Activated CD4-positive, alpha-beta T cell treated with anti-CD3 and anti-CD28 coated beads for 36 hours (primary cell): ENCODE measurements at regions of chr18 and their contacts with region 1.

Region 1: DNA sequence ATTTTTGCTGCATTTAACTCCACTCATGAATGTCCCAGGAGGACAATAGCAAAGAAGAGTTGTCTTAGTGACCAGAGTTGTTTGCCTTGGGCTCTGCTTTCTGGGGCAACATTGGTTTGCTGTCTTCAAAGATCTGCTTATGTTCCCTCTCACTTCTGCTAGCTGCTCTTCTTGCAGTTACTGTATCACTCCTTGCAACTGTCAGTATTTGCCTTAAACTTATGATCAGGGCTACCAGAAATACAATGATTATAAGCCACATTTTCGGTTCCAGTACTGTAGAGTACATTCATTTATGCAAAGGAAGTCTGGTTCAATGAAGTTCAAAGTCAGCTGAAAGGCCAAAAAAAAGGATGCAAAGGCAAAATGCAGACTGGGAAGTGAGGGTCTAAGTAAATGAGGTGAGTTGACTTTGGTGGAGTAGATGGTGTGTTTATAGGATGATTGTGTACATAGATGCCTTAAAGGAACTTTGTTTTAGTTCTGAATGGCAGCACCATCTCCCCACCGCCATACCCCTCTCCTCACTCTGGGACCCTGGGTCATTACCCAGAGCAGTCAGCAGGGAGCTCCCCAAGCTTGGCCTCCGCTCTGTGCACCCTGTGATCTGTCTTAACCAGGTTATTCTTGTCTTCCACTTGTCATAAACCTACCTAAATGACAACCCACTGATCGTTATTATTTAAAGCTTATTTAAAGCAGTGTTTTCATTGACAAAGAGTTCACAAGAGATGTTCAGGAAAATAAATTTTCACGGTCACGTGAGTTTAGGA is 236.0 kb downstream of the DOK6 start:
- DNase-seq: peak; percentile 54
- ATAC-seq: peak; percentile 73
- H3K4me3 Mint-ChIP-seq: no peak overlapping the region
- H3K27ac Mint-ChIP-seq: no peak overlapping the region
- H3K4me1 Mint-ChIP-seq: no peaks in the 10 kb centered on the region
- H3K27me3 Mint-ChIP-seq: peaks cover 2% of the 10 kb centered on the region

Region 2: GRCh38 chr18:69659142-69659651 is 22.5 kb after region 1 on chr18:
- CTCF ChIA-PET with region 1: no interaction called
- POLR2A ChIA-PET with region 1: no interaction called
- intact Hi-C with region 1: no loop called
- DNase-seq: no peak
- ATAC-seq: no peak
- H3K4me3 Mint-ChIP-seq: no peak overlapping the region
- H3K27ac Mint-ChIP-seq: no peak overlapping the region
- H3K4me1 Mint-ChIP-seq: no peaks in the 10 kb centered on the region
- H3K27me3 Mint-ChIP-seq: peaks cover 6% of the 10 kb centered on the region

Region 3: GRCh38 chr18:70072678-70073077 is 436.0 kb after region 1 on chr18:
- CTCF ChIA-PET with region 1: no interaction called
- POLR2A ChIA-PET with region 1: no interaction called
- intact Hi-C with region 1: loop called in 1 of 2 experiments (anchors 5 kb)
- DNase-seq: no peak
- ATAC-seq: no peak
- H3K4me3 Mint-ChIP-seq: no peak overlapping the region
- H3K27ac Mint-ChIP-seq: no peak overlapping the region
- H3K4me1 Mint-ChIP-seq: no peaks in the 10 kb centered on the region
- H3K27me3 Mint-ChIP-seq: no peaks in the 10 kb centered on the region

Region 4: GRCh38 chr18:70442933-70443332 is 806.2 kb after region 1 on chr18:
- CTCF ChIA-PET with region 1: no interaction called
- POLR2A ChIA-PET with region 1: no interaction called
- intact Hi-C with region 1: loop called in 1 of 2 experiments (anchors 10 kb)
- DNase-seq: no peak
- ATAC-seq: no peak
- H3K4me3 Mint-ChIP-seq: no peak overlapping the region
- H3K27ac Mint-ChIP-seq: no peak overlapping the region
- H3K4me1 Mint-ChIP-seq: no peaks in the 10 kb centered on the region
- H3K27me3 Mint-ChIP-seq: peaks cover 5% of the 10 kb centered on the region